CD8-positive, alpha-beta T cell (primary cell): ENCODE measurements at regions of chrX and their contacts with region 1.

Region 1: DNA sequence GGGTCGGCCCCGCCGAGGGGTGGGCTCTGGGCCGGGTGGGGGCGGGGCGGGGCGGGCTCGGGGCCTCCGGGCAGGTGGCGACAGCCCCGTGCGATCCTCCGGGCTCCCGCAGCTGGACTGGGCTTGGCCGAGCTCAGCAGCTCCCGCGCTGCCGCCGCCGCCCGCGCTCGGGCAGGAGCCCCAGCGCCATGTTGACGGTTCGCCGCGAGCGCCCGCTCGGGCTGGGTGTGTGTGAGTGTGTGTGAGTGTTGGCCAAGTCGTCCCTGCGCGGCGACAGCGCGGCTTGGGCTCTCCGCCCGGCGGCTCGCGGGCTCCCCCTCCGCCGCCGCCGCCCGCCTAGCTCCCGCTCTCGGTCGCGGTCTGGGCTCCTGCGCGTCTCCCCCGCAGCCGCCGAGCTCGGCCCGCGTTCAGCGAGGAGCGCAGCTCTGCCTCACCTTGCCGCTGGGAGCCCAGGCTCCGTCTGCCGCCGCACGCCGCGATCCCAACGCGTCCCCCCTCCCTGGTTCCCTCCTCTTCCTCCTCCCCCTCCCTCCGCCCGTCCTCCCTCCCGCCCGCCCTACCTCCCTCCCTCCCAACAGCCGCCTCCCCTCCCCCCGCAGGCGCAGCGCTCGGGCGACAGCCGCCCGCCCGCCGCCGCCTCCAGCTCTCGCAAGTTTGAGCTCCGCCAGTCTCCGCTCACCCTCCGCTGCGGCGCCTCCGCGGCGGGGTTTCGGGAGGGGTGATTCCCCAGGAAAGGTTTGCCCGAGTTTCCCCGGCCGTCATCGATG is at the start of gene BCOR:
- DNase-seq: peak; percentile 47 to 88 (median 75)
- ATAC-seq: peak; percentile 29
- H3K4me3 ChIP-seq: peak within 1 kb of the TSS; percentile 47 to 57
- H3K4me3 Mint-ChIP-seq: peak within 1 kb of the TSS; percentile 94
- H3K27ac ChIP-seq: peak within 1 kb of the TSS; percentile 23 to 60
- H3K27ac Mint-ChIP-seq: peak within 1 kb of the TSS; percentile 93
- H3K4me1 ChIP-seq: peaks cover 22% of the 10 kb centered on the region
- H3K4me1 Mint-ChIP-seq: peaks cover 27% of the 10 kb centered on the region
- H3K27me3 ChIP-seq: no peaks in the 10 kb centered on the region
- H3K27me3 Mint-ChIP-seq: no peaks in the 10 kb centered on the region
- CTCF ChIP-seq: no peak
- total RNA-seq, gene BCOR: 35.5 to 38.5 TPM

Region 2: GRCh38 chrX:38803586-38804431 is 1293.9 kb before region 1 on chrX:
- CTCF ChIA-PET with region 1: no interaction called
- POLR2A ChIA-PET with region 1: no interaction called
- intact Hi-C with region 1: loop called in 1 of 2 experiments (anchors 10 kb)
- DNase-seq: peak in 8 of 9 experiments; percentile 29 to 77 (median 54)
- ATAC-seq: peak; percentile 36
- H3K4me3 ChIP-seq: peak overlapping the region; percentile 80 to 84
- H3K4me3 Mint-ChIP-seq: peak overlapping the region; percentile 95
- H3K27ac ChIP-seq: peak overlapping the region; percentile 71 to 77
- H3K27ac Mint-ChIP-seq: peak overlapping the region; percentile 98
- H3K4me1 ChIP-seq: peaks cover 7% of the 10 kb centered on the region
- H3K4me1 Mint-ChIP-seq: peaks cover 32% of the 10 kb centered on the region
- H3K27me3 ChIP-seq: no peaks in the 10 kb centered on the region
- H3K27me3 Mint-ChIP-seq: no peaks in the 10 kb centered on the region
- CTCF ChIP-seq: no peak

Region 3: GRCh38 chrX:38948046-38948445 is 1149.6 kb before region 1 on chrX:
- CTCF ChIA-PET with region 1: no interaction called
- POLR2A ChIA-PET with region 1: no interaction called
- intact Hi-C with region 1: no loop called
- DNase-seq: no peak
- ATAC-seq: no peak
- H3K4me3 ChIP-seq: no peak overlapping the region
- H3K4me3 Mint-ChIP-seq: no peak overlapping the region
- H3K27ac ChIP-seq: no peak overlapping the region
- H3K27ac Mint-ChIP-seq: no peak overlapping the region
- H3K4me1 ChIP-seq: no peaks in the 10 kb centered on the region
- H3K4me1 Mint-ChIP-seq: no peaks in the 10 kb centered on the region
- H3K27me3 ChIP-seq: no peaks in the 10 kb centered on the region
- H3K27me3 Mint-ChIP-seq: no peaks in the 10 kb centered on the region
- CTCF ChIP-seq: no peak

Region 4: GRCh38 chrX:39578354-39578869 is 519.3 kb before region 1 on chrX:
- CTCF ChIA-PET with region 1: no interaction called
- POLR2A ChIA-PET with region 1: no interaction called
- intact Hi-C with region 1: no loop called
- DNase-seq: peak in 8 of 9 experiments; percentile 0 to 52 (median 20)
- ATAC-seq: peak; percentile 57
- H3K4me3 ChIP-seq: no peak overlapping the region
- H3K4me3 Mint-ChIP-seq: peak overlapping the region; percentile 69
- H3K27ac ChIP-seq: no peak overlapping the region
- H3K27ac Mint-ChIP-seq: peak overlapping the region; percentile 53
- H3K4me1 ChIP-seq: peaks cover 9% of the 10 kb centered on the region
- H3K4me1 Mint-ChIP-seq: peaks cover 4% of the 10 kb centered on the region
- H3K27me3 ChIP-seq: no peaks in the 10 kb centered on the region
- H3K27me3 Mint-ChIP-seq: no peaks in the 10 kb centered on the region
- CTCF ChIP-seq: no peak

Region 5: DNA sequence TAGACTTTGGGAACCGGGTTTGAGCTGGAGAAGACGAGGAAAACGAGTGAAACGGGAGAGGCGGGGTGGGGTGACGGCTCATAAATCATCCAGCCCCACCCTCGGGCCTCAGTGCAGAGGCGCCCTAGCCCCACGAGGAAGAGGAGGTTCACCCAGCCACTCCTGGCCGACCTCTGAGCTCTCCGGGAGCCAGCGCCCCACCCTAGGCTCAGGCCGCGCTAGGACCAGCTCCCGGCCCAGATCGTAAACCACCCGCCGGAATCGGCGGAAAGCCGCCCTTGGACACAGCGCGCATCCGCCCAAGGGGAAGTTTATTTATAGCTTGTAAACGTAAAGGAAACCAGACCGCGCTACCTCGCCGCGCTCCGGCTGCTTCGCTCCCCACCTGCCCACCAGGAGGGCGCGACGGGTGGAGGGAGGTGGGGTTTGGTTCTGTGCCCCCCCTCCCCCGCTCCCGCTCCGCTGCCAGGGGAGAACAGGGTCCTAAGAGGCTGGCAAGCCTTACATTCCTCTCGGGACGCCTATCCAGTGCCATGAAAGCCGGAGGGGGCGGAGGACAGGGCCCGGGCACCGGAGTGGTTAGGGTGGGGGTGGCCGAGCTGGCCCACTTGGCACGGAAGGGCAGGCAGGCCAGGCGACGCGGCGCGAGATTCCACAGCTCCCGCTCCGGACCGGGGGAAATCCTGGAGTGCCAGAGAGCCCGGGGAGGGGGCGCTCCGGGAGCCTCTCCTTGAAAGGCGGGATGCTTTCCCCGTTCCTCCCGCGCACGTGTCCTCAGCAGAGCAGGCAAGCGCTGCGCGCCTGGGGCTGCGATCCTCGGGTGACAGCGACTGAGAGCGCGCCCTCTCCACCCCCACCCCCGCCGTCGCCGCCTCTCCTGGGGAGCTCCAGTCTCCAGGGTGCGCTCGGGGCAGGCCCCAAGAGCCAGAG is 84.1 kb before region 1 on chrX:
- CTCF ChIA-PET with region 1: interaction called, 4 read pairs
- POLR2A ChIA-PET with region 1: interaction called, 4 read pairs
- intact Hi-C with region 1: loop called in 1 of 2 experiments (anchors 5 kb)
- DNase-seq: peak in 6 of 9 experiments; percentile 18 to 66 (median 46)
- ATAC-seq: peak; percentile 37
- H3K4me3 ChIP-seq: peak overlapping the region; percentile 54 to 57
- H3K4me3 Mint-ChIP-seq: peak overlapping the region; percentile 76
- H3K27ac ChIP-seq: no peak overlapping the region
- H3K27ac Mint-ChIP-seq: no peak overlapping the region
- H3K4me1 ChIP-seq: peaks cover 40% of the 10 kb centered on the region
- H3K4me1 Mint-ChIP-seq: peaks cover 27% of the 10 kb centered on the region
- H3K27me3 ChIP-seq: peaks cover 0 to 3% of the 10 kb centered on the region in 2 experiments
- H3K27me3 Mint-ChIP-seq: peaks cover 2% of the 10 kb centered on the region
- CTCF ChIP-seq: no peak

Region 6: GRCh38 chrX:40108959-40109287 is 11.2 kb after region 1 on chrX:
- CTCF ChIA-PET with region 1: no interaction called
- POLR2A ChIA-PET with region 1: interaction called, 16 read pairs
- intact Hi-C with region 1: loop called (anchors 1 to 2 kb)
- DNase-seq: peak; percentile 26 to 85 (median 69)
- ATAC-seq: peak; percentile 57
- H3K4me3 ChIP-seq: peak overlapping the region; percentile 37 to 40
- H3K4me3 Mint-ChIP-seq: peak overlapping the region; percentile 64
- H3K27ac ChIP-seq: no peak overlapping the region
- H3K27ac Mint-ChIP-seq: no peak overlapping the region
- H3K4me1 ChIP-seq: peaks cover 15% of the 10 kb centered on the region
- H3K4me1 Mint-ChIP-seq: peaks cover 13% of the 10 kb centered on the region
- H3K27me3 ChIP-seq: no peaks in the 10 kb centered on the region
- H3K27me3 Mint-ChIP-seq: no peaks in the 10 kb centered on the region
- CTCF ChIP-seq: no peak

Region 7: GRCh38 chrX:40132751-40133150 is 35.1 kb after region 1 on chrX:
- CTCF ChIA-PET with region 1: no interaction called
- POLR2A ChIA-PET with region 1: no interaction called
- intact Hi-C with region 1: no loop called
- DNase-seq: no peak
- ATAC-seq: no peak
- H3K4me3 ChIP-seq: no peak overlapping the region
- H3K4me3 Mint-ChIP-seq: no peak overlapping the region
- H3K27ac ChIP-seq: no peak overlapping the region
- H3K27ac Mint-ChIP-seq: no peak overlapping the region
- H3K4me1 ChIP-seq: no peaks in the 10 kb centered on the region
- H3K4me1 Mint-ChIP-seq: no peaks in the 10 kb centered on the region
- H3K27me3 ChIP-seq: no peaks in the 10 kb centered on the region
- H3K27me3 Mint-ChIP-seq: no peaks in the 10 kb centered on the region
- CTCF ChIP-seq: no peak

Region 8: DNA sequence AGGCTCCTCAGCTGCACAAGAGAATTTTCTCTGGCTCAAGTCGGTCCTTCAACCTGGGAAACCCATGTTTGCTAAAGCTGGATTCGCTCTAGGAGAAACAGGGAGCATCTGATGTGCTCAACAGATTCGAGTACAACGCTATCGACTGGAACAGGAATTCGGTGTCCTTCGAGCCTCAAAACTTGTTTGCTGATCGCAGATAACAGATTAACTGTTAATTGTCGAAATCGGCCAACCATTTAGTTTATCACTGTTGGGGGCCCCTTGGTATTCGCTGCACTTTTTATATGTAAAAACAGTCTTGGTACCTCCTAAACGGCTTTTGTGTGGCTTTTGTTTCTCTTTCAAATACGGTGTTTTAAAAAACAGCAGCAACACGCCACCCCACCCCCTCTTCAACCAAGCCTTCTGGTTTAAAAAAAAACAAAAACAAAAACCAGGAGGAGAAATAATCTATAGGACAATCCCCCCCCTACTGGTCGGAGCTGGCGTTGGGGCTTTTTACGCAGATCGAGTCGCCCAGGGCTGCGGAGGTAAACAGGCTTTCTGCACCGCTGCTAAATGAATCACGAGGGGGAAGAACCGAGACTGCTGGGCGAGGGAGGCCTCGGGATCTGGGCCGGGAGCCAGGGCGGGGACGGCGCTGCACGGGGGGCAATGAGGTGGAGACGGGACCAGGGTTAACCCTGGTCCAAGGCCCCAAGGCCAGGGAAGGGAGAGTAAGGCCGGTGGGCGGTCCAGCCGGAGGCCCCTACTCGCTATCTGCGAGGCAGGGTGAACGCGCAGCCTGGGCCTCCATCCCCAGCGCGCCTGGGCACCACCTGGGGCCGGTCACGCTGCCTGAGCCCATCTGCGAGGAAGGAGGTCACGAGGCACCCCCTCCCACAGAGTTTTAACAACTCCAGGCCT is 71.8 kb after region 1 on chrX:
- CTCF ChIA-PET with region 1: interaction called, 7 read pairs
- POLR2A ChIA-PET with region 1: interaction called, 106 read pairs
- intact Hi-C with region 1: loop called (anchors 1 to 2 kb)
- DNase-seq: peak; percentile 62 to 91 (median 81)
- ATAC-seq: peak; percentile 66
- H3K4me3 ChIP-seq: peak overlapping the region; percentile 42 to 61
- H3K4me3 Mint-ChIP-seq: peak overlapping the region; percentile 85
- H3K27ac ChIP-seq: peak overlapping the region; percentile 83 to 95
- H3K27ac Mint-ChIP-seq: peak overlapping the region; percentile 96
- H3K4me1 ChIP-seq: peaks cover 49% of the 10 kb centered on the region
- H3K4me1 Mint-ChIP-seq: peaks cover 48% of the 10 kb centered on the region
- H3K27me3 ChIP-seq: no peaks in the 10 kb centered on the region
- H3K27me3 Mint-ChIP-seq: no peaks in the 10 kb centered on the region
- CTCF ChIP-seq: peak; percentile 22

Region 9: DNA sequence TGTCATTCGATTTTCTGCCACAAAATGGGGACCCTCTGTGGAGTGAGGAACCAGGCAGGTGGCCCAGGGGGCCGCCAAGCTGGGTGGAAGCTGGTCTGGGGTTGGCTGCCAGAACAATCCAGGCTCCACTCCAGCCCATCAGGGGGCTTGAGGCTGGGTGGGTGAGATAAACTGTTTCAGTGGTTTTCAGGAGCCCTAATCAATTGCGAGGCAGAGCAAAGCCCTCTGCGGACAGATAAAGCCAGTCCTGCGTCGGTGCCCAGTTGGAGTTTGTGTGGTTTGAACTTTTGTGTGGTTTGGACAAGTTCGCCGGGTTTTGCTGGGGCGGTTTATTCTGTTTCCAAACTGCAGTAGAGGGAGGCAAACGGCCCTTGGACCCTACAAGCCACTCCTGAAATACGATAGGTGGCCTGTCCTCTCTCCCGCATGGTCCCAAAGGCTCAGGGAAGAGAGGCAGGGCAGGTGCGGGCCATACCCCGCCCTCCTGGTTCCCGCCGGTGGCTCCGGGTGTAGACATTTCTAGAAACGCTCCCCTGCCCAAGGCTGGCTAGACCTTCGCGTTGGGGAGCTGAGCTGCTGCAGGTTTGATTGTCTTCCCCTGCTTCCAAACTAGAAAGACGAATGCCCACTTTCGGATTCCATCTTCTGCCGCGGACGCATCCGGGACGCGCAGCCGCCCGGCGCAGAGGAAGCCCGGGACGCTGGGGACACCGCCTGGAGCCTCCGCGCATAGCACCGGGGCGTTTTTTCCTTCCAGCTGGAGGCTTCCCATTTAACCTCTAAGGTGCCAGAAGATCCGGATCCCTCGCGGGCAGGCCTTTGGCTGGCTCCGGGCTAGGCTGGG is 169.0 kb after region 1 on chrX:
- CTCF ChIA-PET with region 1: no interaction called
- POLR2A ChIA-PET with region 1: interaction called, 4 read pairs
- intact Hi-C with region 1: loop called in 1 of 2 experiments (anchors 10 kb)
- DNase-seq: peak; percentile 10 to 72 (median 46)
- ATAC-seq: peak; percentile 89
- H3K4me3 ChIP-seq: peak overlapping the region; percentile 57 to 65
- H3K4me3 Mint-ChIP-seq: peak overlapping the region; percentile 79
- H3K27ac ChIP-seq: no peak overlapping the region
- H3K27ac Mint-ChIP-seq: no peak overlapping the region
- H3K4me1 ChIP-seq: peaks cover 11% of the 10 kb centered on the region
- H3K4me1 Mint-ChIP-seq: peaks cover 6% of the 10 kb centered on the region
- H3K27me3 ChIP-seq: no peaks in the 10 kb centered on the region
- H3K27me3 Mint-ChIP-seq: no peaks in the 10 kb centered on the region
- CTCF ChIP-seq: peak; percentile 41

Region 10: DNA sequence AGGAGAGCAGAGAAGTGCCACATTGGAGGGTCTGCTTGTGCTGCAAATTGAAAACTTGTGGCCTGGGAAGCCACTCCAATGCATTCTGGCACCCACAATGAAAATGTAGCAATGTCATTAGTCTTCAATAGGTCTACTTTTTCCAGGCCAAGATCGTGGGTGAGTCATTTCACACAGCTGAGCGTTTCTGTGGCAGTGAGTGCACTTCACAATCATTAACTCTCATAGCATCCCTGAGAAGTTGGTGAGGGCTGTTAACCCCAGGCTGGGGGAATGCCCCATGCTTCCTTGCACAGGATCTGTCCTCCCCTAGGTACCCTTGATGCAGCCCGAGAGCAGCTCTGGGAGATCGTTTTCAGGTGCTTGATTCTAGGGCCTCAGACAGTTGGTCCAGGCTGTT is 286.3 kb after region 1 on chrX:
- CTCF ChIA-PET with region 1: no interaction called
- POLR2A ChIA-PET with region 1: no interaction called
- intact Hi-C with region 1: no loop called
- DNase-seq: no peak
- ATAC-seq: no peak
- H3K4me3 ChIP-seq: no peak overlapping the region
- H3K4me3 Mint-ChIP-seq: no peak overlapping the region
- H3K27ac ChIP-seq: no peak overlapping the region
- H3K27ac Mint-ChIP-seq: no peak overlapping the region
- H3K4me1 ChIP-seq: no peaks in the 10 kb centered on the region
- H3K4me1 Mint-ChIP-seq: no peaks in the 10 kb centered on the region
- H3K27me3 ChIP-seq: no peaks in the 10 kb centered on the region
- H3K27me3 Mint-ChIP-seq: no peaks in the 10 kb centered on the region
- CTCF ChIP-seq: no peak